Sigmoid colon (tissue), 7 donors: ENCODE measurements at regions of chr19 and their contacts with region 1.

Region 1: DNA sequence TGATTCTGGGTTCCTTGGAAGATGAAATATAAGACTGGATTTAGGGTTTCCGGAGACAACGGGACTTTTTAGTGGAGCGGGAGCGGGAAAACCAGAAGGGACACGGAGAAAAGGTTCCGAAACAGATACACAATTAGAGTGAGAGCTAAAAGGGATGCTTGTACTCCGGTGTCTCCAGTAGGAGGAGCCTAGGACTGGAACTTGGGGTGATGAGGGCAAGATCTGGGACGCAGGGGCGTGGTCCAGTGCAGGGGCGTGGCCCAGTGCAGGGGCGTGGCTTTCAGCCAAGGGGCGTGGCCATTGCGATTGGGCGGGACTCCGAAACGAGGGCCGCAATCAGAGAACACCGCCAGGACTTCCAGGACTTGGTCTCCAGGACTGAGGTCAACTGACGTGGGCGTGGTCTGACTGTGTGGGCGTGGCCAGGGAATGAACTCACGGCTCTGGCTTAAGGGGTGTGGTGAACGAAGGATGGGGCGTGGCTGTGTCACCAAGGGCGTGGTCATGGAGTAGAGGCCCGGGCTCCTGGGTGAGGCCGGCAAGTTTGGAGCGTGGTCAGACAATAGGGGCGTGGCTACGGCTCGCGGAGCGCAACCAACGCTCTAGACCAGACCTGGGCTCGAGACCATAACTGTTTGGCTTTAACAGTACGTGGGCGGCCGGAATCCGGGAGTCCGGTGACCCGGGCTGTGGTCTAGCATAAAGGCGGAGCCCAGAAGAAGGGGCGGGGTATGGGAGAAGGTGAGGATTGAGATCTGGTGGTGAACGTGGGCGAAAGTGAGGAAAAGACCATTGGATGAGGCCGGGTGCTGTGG is at the start of gene DKKL1:
- DNase-seq: peak; percentile 100
- H3K4me3 ChIP-seq: peak within 1 kb of the TSS; percentile 76 to 92 (median 85)
- H3K27ac ChIP-seq: peak within 1 kb of the TSS; percentile 93 to 98 (median 96)
- H3K4me1 ChIP-seq: peaks cover 0 to 34% (median 20%) of the 10 kb centered on the region in 4 donors
- H3K27me3 ChIP-seq: no peaks in the 10 kb centered on the region
- CTCF ChIP-seq: peak in 1 of 4 experiments; percentile 21
- EP300 ChIP-seq: peak in 1 of 4 donors; percentile 10
- POLR2A ChIP-seq: peak; percentile 78 to 84
- total RNA-seq, gene DKKL1: 1.8 to 2.0 TPM in 2 of 4 donors, not detected in the others

Region 2: DNA sequence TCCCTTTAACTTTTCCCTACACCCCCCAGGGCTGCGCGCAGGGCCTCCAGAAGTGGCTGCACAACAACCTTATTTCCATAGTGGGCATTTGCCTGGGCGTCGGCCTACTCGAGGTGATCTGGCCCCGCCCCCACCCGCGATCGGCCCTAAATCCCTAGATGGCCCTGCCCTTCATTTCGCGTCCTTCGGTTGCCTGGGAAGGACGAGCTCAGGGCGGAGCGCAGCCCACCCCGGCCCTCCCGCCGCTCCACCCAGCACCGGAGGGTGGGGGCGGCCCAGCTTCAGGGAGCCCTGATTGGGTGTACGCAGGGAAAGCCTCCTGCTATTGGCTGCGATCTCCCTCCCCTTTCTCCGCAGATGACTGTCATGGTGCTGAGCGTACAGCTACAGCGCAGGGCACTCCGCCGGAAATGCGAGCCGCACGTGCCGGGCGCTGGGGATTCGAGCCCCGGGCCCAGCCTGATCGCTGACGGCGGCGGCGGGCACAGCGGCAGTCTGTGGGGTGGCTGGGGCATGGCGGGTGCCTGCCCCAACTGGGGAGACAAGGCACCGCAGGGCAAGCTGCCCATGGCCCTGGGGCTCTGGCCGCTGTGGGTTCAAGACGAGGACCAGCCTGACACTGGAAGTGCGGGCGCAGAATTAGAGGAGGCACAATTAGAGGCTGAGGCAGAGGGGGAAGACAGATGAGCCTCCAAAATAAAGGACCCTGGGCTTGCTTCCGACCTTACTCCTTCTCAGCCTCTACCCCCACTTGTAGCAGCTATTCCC is 24.0 kb before region 1 on chr19:
- intact Hi-C with region 1: loop called (anchors 1 kb)
- DNase-seq: peak; percentile 97
- H3K4me3 ChIP-seq: peak overlapping the region; percentile 22 to 45 (median 42)
- H3K27ac ChIP-seq: peak overlapping the region; percentile 73 to 90 (median 84)
- H3K4me1 ChIP-seq: peaks cover 0 to 26% (median 22%) of the 10 kb centered on the region in 4 donors
- H3K27me3 ChIP-seq: no peaks in the 10 kb centered on the region
- CTCF ChIP-seq: no peak
- EP300 ChIP-seq: peak in 1 of 4 donors; percentile 9
- POLR2A ChIP-seq: no peak